Uterus (tissue), 4 donors: ENCODE measurements at regions of chr6 and their contacts with region 1.

Region 1: DNA sequence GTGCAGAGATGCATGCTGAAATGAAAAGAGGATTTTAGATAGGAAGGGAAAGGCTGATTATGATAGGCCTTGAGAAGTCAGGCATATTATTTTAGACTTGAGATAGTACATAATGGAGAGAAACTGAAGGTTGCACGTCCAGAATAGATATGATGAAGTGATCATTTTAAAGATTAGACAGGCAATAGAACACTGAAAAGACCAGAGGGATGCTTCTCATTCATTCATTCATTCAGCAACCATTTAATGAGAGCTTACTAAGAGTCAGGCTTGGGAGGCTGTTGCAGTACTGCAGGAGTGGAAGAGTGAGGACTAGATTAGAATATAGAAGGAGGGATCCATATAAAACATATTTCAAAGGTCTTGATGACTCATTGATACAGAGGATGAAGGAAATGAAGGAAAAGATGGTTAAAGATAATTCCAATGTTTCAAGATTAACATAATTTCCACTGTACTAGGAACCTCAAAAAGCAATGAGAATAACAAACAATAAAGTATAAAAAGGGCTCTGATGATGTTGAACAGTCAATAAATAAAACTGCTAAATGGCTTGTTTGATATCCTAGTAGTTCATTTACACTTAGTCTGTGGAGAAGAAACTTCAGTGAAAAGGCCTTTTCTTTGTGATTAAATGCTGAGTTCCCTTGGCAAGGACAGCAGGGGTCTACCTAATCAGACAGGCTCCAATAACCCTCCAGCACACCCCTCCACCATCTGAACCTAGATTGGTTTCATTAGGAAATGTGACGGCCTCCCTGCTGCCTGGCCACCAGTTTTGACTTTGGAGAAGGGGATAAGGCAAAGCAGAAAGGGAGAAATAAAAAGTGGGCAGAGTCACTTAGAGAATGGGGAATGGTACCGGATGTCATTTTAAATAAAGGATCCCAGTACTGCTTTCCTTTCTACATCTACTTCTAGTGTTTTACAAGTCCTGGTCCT is 5.3 kb upstream of the FBXO9 start:
- DNase-seq: no peak
- H3K4me3 ChIP-seq: peak overlapping the region in 1 of 2 donors; percentile 77
- H3K27ac ChIP-seq: peak overlapping the region in 1 of 2 donors; percentile 95
- H3K4me1 ChIP-seq: peaks cover 0 to 10% of the 10 kb centered on the region in 2 donors
- H3K27me3 ChIP-seq: no peaks in the 10 kb centered on the region
- CTCF ChIP-seq: no peak
- POLR2A ChIP-seq: no peak

Region 2: DNA sequence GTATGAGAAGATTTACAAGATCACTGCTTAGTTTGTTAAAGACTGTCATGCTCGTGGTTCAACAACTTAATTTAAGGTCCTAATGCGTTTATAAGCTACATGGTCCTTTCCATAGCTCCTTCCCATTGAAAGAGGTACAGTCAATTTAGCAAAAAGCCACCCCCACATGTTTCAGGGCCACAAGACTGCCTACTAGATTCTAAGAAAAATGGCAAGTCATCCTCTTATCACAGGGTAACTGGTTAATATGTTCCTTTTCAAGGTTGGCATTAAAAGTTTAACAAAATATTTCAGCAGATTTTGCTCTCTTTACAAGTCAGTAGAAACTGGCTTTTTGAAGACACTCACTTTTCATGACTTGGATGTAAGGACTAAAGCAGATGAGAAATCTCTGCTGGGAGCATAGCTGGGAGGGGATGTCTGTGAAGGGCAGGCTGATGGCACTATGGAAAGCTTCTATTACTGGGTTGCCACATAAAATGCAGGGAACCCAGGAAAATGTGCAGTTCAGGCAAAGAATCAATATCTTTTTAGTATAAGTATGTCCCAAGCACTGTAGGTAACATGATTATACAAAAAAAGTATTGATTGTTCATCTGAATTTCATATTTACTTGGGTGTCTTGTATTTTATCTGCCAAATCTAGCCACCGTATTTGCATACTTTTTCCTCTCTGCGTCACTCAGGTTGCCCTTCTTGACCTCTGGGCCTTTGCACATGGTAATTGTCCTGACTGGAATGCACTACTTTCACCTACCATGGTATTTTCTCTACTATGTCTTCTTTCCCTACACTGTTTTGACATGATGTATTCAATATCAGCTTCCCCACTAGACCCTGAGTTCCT is 165.9 kb before region 1 on chr6:
- intact Hi-C with region 1: loop called (anchors 10 kb)
- DNase-seq: no peak
- H3K4me3 ChIP-seq: no peak overlapping the region
- H3K27ac ChIP-seq: no peak overlapping the region
- H3K4me1 ChIP-seq: no peaks in the 10 kb centered on the region
- H3K27me3 ChIP-seq: no peaks in the 10 kb centered on the region
- CTCF ChIP-seq: no peak
- POLR2A ChIP-seq: no peak